SK-N-SH (cell line): ENCODE measurements at regions of chr18 and their contacts with region 1.

Region 1: DNA sequence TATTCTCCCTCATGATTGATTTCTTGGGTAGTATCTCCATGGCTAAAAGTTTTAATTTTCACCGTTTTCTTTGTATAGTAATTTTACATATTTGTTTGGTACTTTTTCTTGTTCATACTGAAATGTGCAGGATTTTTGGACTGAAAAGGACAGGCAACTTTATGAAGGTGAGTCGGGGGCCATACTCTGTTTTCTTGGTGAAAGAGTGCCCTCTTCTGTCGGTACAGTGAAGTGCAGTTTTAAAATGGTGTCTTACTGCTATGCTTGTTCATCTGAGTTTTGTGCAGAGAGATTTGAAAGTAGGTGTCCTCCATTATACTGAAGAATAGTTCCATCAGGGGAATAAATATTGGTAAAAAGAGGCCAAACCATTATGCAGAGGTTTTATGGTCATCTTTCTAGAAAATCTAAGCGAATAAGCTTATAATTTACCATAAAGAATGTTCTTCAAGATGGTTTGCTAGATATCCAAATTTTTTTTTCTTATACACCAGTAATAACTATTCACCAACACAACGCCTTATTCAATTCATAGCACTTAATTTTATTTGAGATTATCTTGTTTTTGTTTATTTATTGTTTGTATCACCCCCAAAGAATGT is 8.7 kb upstream of the SERPINB13 start:
- DNase-seq: peak; percentile 28
- H3K4me3 ChIP-seq: no peak overlapping the region; a peak in 1 of 4 replicates
- H3K27ac ChIP-seq: no peak overlapping the region
- H3K4me1 ChIP-seq: no peaks in the 10 kb centered on the region; a peak in 1 of 4 replicates
- H3K27me3 ChIP-seq: no peaks in the 10 kb centered on the region; the same call in 1 of the 2 replicates
- CTCF ChIP-seq: peak; percentile 72
- EP300 ChIP-seq: no peak
- RAD21 ChIP-seq: peak; percentile 72

Region 2: GRCh38 chr18:63567276-63567675 is 11.2 kb before region 1 on chr18:
- CTCF ChIA-PET with region 1: interaction called, 28 read pairs
- POLR2A ChIA-PET with region 1: no interaction called
- DNase-seq: no peak
- H3K4me3 ChIP-seq: no peak overlapping the region
- H3K27ac ChIP-seq: no peak overlapping the region
- H3K4me1 ChIP-seq: no peaks in the 10 kb centered on the region
- H3K27me3 ChIP-seq: peaks cover 16% of the 10 kb centered on the region; the same call in 1 of the 2 replicates
- CTCF ChIP-seq: no peak
- EP300 ChIP-seq: no peak
- RAD21 ChIP-seq: no peak

Region 3: DNA sequence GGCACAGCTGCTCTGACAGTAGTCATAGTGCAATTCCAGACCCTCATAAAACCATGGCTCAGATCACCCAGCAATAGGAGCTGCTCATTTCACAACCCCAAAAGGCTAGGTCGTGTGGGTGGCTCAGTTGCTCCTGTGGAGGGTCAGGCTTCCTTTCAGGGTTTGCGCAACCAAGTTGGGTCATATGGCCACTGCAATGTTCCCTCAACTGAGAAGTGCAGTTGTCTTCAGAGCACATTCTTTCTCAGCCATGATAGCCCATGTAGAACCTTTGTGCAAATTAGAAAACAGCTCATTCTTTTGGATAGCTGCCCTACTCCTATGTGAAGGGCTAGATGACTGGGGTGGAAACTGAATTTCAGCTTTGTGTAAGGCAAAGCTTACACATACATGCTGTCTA is 11.9 kb after region 1 on chr18:
- CTCF ChIA-PET with region 1: interaction called, 21 read pairs
- POLR2A ChIA-PET with region 1: no interaction called
- DNase-seq: no peak
- H3K4me3 ChIP-seq: no peak overlapping the region
- H3K27ac ChIP-seq: no peak overlapping the region
- H3K4me1 ChIP-seq: no peaks in the 10 kb centered on the region; a peak in 1 of 4 replicates
- H3K27me3 ChIP-seq: peaks cover 20% of the 10 kb centered on the region; the same call in 1 of the 2 replicates
- CTCF ChIP-seq: no peak
- EP300 ChIP-seq: no peak
- RAD21 ChIP-seq: no peak